ENCODE measurements at regions of chr10 and their contacts with region 1.

Region 1: GRCh38 chr10:7054900-7055299 is 355.9 kb downstream of the SFMBT2 start:
- DNase-seq: peak; percentile 26
- ATAC-seq: peak; percentile 94
- H3K4me3 Mint-ChIP-seq: no peak overlapping the region
- H3K27ac Mint-ChIP-seq: no peak overlapping the region
- H3K4me1 Mint-ChIP-seq: peaks cover 11% of the 10 kb centered on the region
- H3K27me3 Mint-ChIP-seq: no peaks in the 10 kb centered on the region
- CTCF ChIP-seq: peak; percentile 24; the same call in 1 of the 2 replicates

Region 2: GRCh38 chr10:7085913-7086589 is 31.2 kb after region 1 on chr10:
- CTCF ChIA-PET with region 1: interaction called, 21 read pairs
- POLR2A ChIA-PET with region 1: no interaction called
- DNase-seq: peak; percentile 20
- ATAC-seq: peak; percentile 86
- H3K4me3 Mint-ChIP-seq: no peak overlapping the region
- H3K27ac Mint-ChIP-seq: peak overlapping the region; percentile 42
- H3K4me1 Mint-ChIP-seq: peaks cover 49% of the 10 kb centered on the region
- H3K27me3 Mint-ChIP-seq: peaks cover 10% of the 10 kb centered on the region
- CTCF ChIP-seq: no peak